Dorsolateral prefrontal cortex (tissue), 120 donors: ENCODE measurements at regions of chr10 and their contacts with region 1.

Region 1: GRCh38 chr10:112183329-112184051 is at the start of gene GPAM:
- DNase-seq: peak; percentile 90 to 99 (median 94)
- H3K4me3 ChIP-seq: peak within 1 kb of the TSS; percentile 63 to 99 (median 92)
- H3K27ac ChIP-seq: peak within 1 kb of the TSS in 56 of 59 donors; percentile 16 to 90 (median 75)
- H3K27me3 ChIP-seq: no peaks in the 10 kb centered on the region
- CTCF ChIP-seq: peak in 41 of 56 donors; percentile 10 to 59 (median 34)
- total RNA-seq, gene GPAM: 7.6 to 51.7 (median 22.4) TPM

Region 2: GRCh38 chr10:111890046-111890445 is 293.4 kb before region 1 on chr10:
- intact Hi-C with region 1: no loop called
- DNase-seq: no peak
- H3K4me3 ChIP-seq: no peak overlapping the region
- H3K27ac ChIP-seq: no peak overlapping the region
- H3K27me3 ChIP-seq: peaks cover 0 to 14% (median 0%) of the 10 kb centered on the region in 45 donors
- CTCF ChIP-seq: no peak

Region 3: GRCh38 chr10:112261281-112261822 is 77.9 kb after region 1 on chr10:
- intact Hi-C with region 1: no loop called
- DNase-seq: no peak
- H3K4me3 ChIP-seq: no peak overlapping the region
- H3K27ac ChIP-seq: no peak overlapping the region
- H3K27me3 ChIP-seq: peaks cover 0 to 3% (median 0%) of the 10 kb centered on the region in 45 donors
- CTCF ChIP-seq: no peak

Region 4: GRCh38 chr10:112314822-112315474 is 131.5 kb after region 1 on chr10:
- intact Hi-C with region 1: loop called in 1 of 2 experiments (anchors 10 kb)
- DNase-seq: peak; percentile 63 to 92 (median 81)
- H3K4me3 ChIP-seq: no peak overlapping the region
- H3K27ac ChIP-seq: no peak overlapping the region
- H3K27me3 ChIP-seq: peaks cover 0 to 11% (median 0%) of the 10 kb centered on the region in 45 donors
- CTCF ChIP-seq: peak; percentile 72 to 97 (median 90)

Region 5: GRCh38 chr10:112421479-112422130 is 238.1 kb after region 1 on chr10:
- intact Hi-C with region 1: no loop called
- DNase-seq: no peak
- H3K4me3 ChIP-seq: no peak overlapping the region
- H3K27ac ChIP-seq: no peak overlapping the region
- H3K27me3 ChIP-seq: no peaks in the 10 kb centered on the region
- CTCF ChIP-seq: no peak

Region 6: DNA sequence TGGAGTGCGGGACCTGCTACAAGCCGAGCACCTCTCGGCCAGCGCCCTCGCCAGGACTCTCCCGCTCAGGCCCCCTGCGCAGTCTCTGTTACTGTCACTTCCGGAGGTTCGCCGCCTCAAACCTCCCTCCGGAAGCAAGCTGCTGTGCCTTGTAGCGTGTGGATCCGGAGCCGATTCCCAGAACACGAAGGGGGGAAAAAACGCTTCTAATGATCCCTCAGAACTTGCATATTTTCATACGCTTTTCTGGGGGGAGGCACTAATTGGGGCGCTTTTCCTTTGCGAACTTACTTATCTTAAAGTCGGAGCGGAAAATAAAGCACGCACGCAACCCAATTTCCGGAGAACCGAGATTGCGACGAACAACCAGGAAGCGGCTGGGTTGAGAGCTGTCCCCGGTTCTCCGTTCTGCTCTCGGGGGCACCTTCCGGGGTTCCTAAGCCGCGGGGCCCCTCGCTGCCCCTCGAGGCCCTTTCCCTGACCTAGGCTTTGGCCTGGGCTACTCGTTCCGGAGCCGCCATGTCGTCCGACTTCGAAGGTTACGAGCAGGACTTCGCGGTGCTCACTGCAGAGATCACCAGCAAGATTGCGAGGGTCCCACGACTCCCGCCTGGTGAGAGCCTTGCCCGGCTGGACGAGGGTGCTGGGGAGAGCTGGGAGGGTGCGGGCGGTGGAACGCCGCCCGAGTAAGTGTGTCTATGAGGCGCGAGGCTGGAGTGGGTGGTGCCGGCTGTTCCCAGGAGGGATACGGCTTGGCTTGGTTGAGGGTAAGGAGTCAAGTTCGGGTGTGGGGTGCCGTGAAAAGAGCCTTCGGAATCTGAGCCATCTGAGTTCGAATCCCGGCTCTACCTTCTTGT is 263.6 kb after region 1 on chr10 and contains the starts of genes VTI1A and ZDHHC6:
- intact Hi-C with region 1: loop called (anchors 10 kb)
- DNase-seq: peak; percentile 73 to 88 (median 83)
- H3K4me3 ChIP-seq: peak within 1 kb of the TSS; percentile 64 to 99 (median 95)
- H3K27ac ChIP-seq: peak within 1 kb of the TSS; percentile 4 to 95 (median 88)
- H3K27me3 ChIP-seq: no peaks in the 10 kb centered on the region
- CTCF ChIP-seq: peak in 37 of 56 donors; percentile 16 to 62 (median 32)
- total RNA-seq, gene VTI1A: 48.2 to 97.0 (median 70.2) TPM
- total RNA-seq, gene ZDHHC6: 18.7 to 37.2 (median 26.1) TPM